ENCODE measurements at regions of chr10 and their contacts with region 1.

Region 1: DNA sequence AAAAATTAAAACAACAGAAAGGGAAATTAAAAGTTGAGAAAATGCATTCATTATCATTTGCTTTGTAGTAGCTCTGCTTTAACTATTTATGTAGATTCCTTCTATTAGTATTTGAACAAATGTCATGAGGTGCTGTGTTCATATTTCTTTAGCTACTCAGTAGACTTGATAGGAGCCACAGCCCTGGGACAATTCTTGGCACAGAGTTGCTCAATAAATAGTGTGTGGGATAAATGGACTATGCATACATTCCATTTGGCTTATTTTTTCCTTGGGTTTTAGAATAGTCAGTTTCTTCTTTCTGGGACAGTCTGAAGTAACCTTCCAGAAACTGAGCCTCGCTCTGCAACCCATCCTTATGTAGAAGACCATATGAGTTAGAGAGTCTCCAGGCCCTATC is 13.4 kb downstream of the RPP30 start:
- DNase-seq: no peak
- H3K4me3 ChIP-seq: no peak overlapping the region
- H3K27ac ChIP-seq: 0 out of 2 replicates have a peak overlapping the region, but pooled peaks have one; percentile 29
- H3K4me1 ChIP-seq: peaks cover 12% of the 10 kb centered on the region
- H3K27me3 ChIP-seq: no peaks in the 10 kb centered on the region
- CTCF ChIP-seq: no peak

Region 2: DNA sequence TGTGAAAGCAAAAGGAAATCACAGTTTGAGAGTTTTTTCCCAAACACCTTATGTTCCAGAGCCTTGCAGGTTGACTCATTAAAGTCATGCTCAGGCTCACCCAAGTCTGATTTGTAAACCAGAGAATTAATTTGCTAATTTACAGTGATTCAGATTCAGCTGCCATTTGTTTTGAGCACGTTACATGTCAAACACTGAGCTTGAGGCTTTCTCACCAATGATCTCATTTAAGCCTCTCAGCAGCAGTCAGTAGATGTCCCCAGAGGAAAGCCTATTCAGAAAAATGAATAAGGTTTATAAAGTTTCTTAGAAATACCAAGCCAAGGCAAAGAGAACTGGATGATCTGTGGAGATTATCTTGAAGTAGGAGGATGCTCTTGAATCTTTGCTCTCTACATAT is 447.7 kb before region 1 on chr10:
- CTCF ChIA-PET with region 1: no interaction called
- POLR2A ChIA-PET with region 1: no interaction called
- intact Hi-C with region 1: no loop called
- DNase-seq: no peak
- H3K4me3 ChIP-seq: no peak overlapping the region
- H3K27ac ChIP-seq: no peak overlapping the region
- H3K4me1 ChIP-seq: no peaks in the 10 kb centered on the region
- H3K27me3 ChIP-seq: no peaks in the 10 kb centered on the region
- CTCF ChIP-seq: no peak

Region 3: GRCh38 chr10:90817128-90817889 is 67.9 kb before region 1 on chr10:
- CTCF ChIA-PET with region 1: no interaction called
- POLR2A ChIA-PET with region 1: no interaction called
- intact Hi-C with region 1: no loop called
- DNase-seq: no peak
- H3K4me3 ChIP-seq: no peak overlapping the region
- H3K27ac ChIP-seq: no peak overlapping the region
- H3K4me1 ChIP-seq: no peaks in the 10 kb centered on the region
- H3K27me3 ChIP-seq: no peaks in the 10 kb centered on the region
- CTCF ChIP-seq: no peak

Region 4: DNA sequence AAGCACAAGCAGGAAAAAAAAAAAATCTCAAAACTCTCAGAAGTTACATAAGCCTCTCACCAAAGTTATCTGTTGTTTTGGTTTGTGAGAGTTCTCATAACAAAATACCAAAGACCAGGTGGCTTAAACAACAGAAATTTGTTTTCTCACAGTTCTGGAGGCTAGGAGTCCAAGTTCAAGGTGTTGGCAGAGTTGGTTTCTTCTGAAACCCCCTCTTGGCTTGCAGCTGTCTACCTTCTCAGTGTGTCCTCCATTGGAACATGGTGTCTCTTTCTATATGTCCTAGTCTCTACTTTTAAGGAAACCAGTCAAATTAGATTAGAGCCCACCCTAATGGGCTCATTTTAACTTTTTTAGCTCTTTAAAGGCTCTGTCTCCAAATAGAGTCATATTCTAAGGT is 957.9 kb after region 1 on chr10:
- CTCF ChIA-PET with region 1: no interaction called
- POLR2A ChIA-PET with region 1: no interaction called
- intact Hi-C with region 1: loop called (anchors 10 kb)
- DNase-seq: no peak
- H3K4me3 ChIP-seq: no peak overlapping the region
- H3K27ac ChIP-seq: no peak overlapping the region
- H3K4me1 ChIP-seq: no peaks in the 10 kb centered on the region
- H3K27me3 ChIP-seq: no peaks in the 10 kb centered on the region
- CTCF ChIP-seq: no peak

Measured in PC-9 (cell line).